Activated CD4-positive, alpha-beta T cell treated with anti-CD3 and anti-CD28 coated beads, Interleukin-2, amount 10 ng/mL, durations not matched to agents 24 days and 14 days (primary cell): ENCODE measurements at regions of chr1 and their contacts with region 1.

Region 1: GRCh38 chr1:234842726-234843641 is 233.0 kb upstream of the IRF2BP2 start:
- DNase-seq: peak; percentile 89
- H3K4me3 Mint-ChIP-seq: peak overlapping the region; percentile 74
- H3K27ac Mint-ChIP-seq: peak overlapping the region; percentile 94
- H3K4me1 Mint-ChIP-seq: peaks cover 84% of the 10 kb centered on the region
- H3K27me3 Mint-ChIP-seq: no peaks in the 10 kb centered on the region

Region 2: DNA sequence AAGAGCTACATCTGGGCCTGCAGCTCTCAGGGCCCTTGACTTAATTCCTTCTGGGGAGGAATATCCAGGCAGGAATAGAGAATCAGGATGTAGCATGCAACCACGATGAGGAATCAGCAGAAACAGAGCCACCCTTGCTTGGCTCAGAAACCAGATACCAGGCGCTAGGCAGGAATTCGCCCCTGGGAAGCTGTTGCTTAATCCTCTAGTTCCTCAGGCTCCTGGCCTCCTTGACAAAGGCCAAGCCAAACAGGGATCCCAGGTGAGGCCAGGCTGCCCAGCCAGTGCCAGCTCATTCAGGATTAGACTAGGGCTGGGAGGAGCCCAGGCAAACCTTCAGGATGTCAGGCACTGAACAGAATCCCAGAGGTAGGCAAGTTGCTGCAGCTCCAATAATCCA is 184.8 kb before region 1 on chr1:
- intact Hi-C with region 1: no loop called
- DNase-seq: no peak
- H3K4me3 Mint-ChIP-seq: no peak overlapping the region
- H3K27ac Mint-ChIP-seq: no peak overlapping the region
- H3K4me1 Mint-ChIP-seq: peaks cover 21% of the 10 kb centered on the region
- H3K27me3 Mint-ChIP-seq: peaks cover 4% of the 10 kb centered on the region

Region 3: GRCh38 chr1:234722904-234723720 is 119.9 kb before region 1 on chr1:
- intact Hi-C with region 1: loop called (anchors 1 kb)
- DNase-seq: peak; percentile 66
- H3K4me3 Mint-ChIP-seq: peak overlapping the region; percentile 76
- H3K27ac Mint-ChIP-seq: peak overlapping the region; percentile 96
- H3K4me1 Mint-ChIP-seq: peaks cover 82% of the 10 kb centered on the region
- H3K27me3 Mint-ChIP-seq: peaks cover 2% of the 10 kb centered on the region

Region 4: GRCh38 chr1:234772345-234773147 is 70.4 kb before region 1 on chr1:
- intact Hi-C with region 1: loop called (anchors 1 kb)
- DNase-seq: peak; percentile 95
- H3K4me3 Mint-ChIP-seq: peak overlapping the region; percentile 65
- H3K27ac Mint-ChIP-seq: peak overlapping the region; percentile 95
- H3K4me1 Mint-ChIP-seq: peaks cover 54% of the 10 kb centered on the region
- H3K27me3 Mint-ChIP-seq: no peaks in the 10 kb centered on the region

Region 5: GRCh38 chr1:234881893-234882771 is 39.1 kb after region 1 on chr1:
- intact Hi-C with region 1: loop called (anchors 1 kb)
- DNase-seq: peak; percentile 69
- H3K4me3 Mint-ChIP-seq: no peak overlapping the region
- H3K27ac Mint-ChIP-seq: peak overlapping the region; percentile 77
- H3K4me1 Mint-ChIP-seq: peaks cover 51% of the 10 kb centered on the region
- H3K27me3 Mint-ChIP-seq: no peaks in the 10 kb centered on the region

Region 6: DNA sequence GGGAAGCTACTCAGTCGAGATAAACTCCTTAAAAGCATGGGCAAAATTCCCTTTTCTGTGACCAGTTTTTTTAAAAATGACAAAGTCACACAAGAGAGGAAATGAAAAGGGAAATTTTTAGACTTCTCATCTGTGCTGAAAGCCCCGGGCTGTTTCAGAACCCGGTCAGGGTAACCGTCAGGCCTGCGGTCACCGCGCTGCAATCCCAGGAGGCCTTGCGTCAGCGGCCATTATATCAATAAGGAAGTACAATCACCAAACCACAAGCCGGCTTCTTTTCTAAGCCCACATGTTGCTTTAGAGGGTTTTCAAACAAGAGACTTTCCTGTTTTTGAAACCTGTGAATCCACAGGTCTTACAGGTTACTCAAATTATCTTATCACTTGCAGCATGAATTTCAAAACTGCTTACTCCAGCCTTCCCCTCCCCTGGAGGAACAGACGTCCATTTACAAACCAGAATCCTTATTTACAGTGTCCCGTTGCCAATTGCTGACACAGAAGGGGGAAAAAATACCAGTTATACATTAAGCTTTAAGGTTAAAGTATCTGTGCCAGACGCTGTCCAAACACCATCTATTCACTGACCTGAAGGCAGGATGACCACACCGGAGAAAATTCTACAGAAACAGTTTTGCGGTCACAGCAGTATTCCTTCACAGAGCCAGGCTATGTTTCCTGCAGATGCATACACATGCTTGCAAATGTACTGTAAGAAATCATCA is 120.4 kb after region 1 on chr1:
- intact Hi-C with region 1: loop called (anchors 1 kb)
- DNase-seq: peak; percentile 96
- H3K4me3 Mint-ChIP-seq: peak overlapping the region; percentile 79
- H3K27ac Mint-ChIP-seq: peak overlapping the region; percentile 97
- H3K4me1 Mint-ChIP-seq: peaks cover 69% of the 10 kb centered on the region
- H3K27me3 Mint-ChIP-seq: no peaks in the 10 kb centered on the region

Region 7: GRCh38 chr1:234987415-234988154 is 144.6 kb after region 1 on chr1:
- intact Hi-C with region 1: loop called (anchors 1 kb)
- DNase-seq: peak; percentile 73
- H3K4me3 Mint-ChIP-seq: peak overlapping the region; percentile 66
- H3K27ac Mint-ChIP-seq: peak overlapping the region; percentile 98
- H3K4me1 Mint-ChIP-seq: peaks cover 71% of the 10 kb centered on the region
- H3K27me3 Mint-ChIP-seq: no peaks in the 10 kb centered on the region